Natural killer cell (primary cell): ENCODE measurements at regions of chr3 and their contacts with region 1.

Region 1: GRCh38 chr3:196867507-196868296 is at the start of gene SENP5:
- DNase-seq: peak; percentile 88 to 95
- ATAC-seq: peak; percentile 94 to 98 (median 96)
- H3K4me3 ChIP-seq: peak within 1 kb of the TSS; percentile 88
- H3K4me3 Mint-ChIP-seq: peak within 1 kb of the TSS; percentile 94
- H3K27ac ChIP-seq: peak within 1 kb of the TSS; percentile 90
- H3K27ac Mint-ChIP-seq: peak within 1 kb of the TSS; percentile 93 to 94
- H3K4me1 ChIP-seq: peaks cover 21% of the 10 kb centered on the region
- H3K4me1 Mint-ChIP-seq: peaks cover 11 to 14% of the 10 kb centered on the region in 2 donors
- H3K27me3 ChIP-seq: no peaks in the 10 kb centered on the region
- H3K27me3 Mint-ChIP-seq: no peaks in the 10 kb centered on the region
- CTCF ChIP-seq: no peak
- total RNA-seq, gene SENP5: 77.0 to 98.7 (median 78.0) TPM

Region 2: DNA sequence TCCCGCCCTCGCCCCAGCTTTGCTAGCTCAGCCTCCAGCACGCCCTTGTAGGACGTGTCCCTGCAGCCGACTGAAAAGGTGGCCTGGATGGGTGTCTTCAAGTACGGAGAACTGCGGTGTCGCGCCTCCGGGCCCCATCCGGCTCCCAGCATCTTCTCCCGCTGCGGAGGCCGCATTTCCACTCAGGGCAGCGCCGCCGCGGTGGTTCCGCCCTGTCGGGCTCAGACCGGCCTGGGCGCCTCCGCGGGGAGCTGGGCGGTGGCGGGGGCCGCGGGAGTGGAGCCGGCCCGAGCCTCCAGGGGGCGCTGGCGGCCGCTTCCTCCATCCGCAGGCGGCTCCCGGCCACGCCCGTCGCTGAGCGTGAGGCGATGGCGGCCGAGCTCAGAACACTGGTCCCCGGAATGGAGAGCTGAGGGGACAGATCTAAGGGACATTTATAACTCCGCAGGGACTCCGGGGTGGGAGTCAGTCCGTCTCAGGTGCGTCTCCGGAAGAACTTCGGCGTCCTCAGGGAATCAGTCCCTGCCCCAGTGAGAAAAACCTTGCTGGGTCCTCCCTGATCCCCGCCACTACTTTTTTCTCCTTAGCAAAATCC is 339.0 kb before region 1 on chr3:
- intact Hi-C with region 1: no loop called
- DNase-seq: peak; percentile 82 to 85
- ATAC-seq: peak; percentile 97 to 99 (median 97)
- H3K4me3 ChIP-seq: peak overlapping the region; percentile 25
- H3K4me3 Mint-ChIP-seq: peak overlapping the region; percentile 63
- H3K27ac ChIP-seq: no peak overlapping the region
- H3K27ac Mint-ChIP-seq: no peak overlapping the region
- H3K4me1 ChIP-seq: peaks cover 10% of the 10 kb centered on the region
- H3K4me1 Mint-ChIP-seq: no peaks in the 10 kb centered on the region
- H3K27me3 ChIP-seq: peaks cover 2% of the 10 kb centered on the region
- H3K27me3 Mint-ChIP-seq: peaks cover 5 to 21% of the 10 kb centered on the region in 2 donors
- CTCF ChIP-seq: peak; percentile 89

Region 3: GRCh38 chr3:196942226-196942914 is 74.7 kb after region 1 on chr3 and contains the start of gene NCBP2:
- intact Hi-C with region 1: loop called (anchors 1 kb)
- DNase-seq: peak; percentile 100
- ATAC-seq: peak; percentile 91 to 97 (median 94)
- H3K4me3 ChIP-seq: peak within 1 kb of the TSS; percentile 80
- H3K4me3 Mint-ChIP-seq: peak within 1 kb of the TSS; percentile 98
- H3K27ac ChIP-seq: peak within 1 kb of the TSS; percentile 89
- H3K27ac Mint-ChIP-seq: peak within 1 kb of the TSS; percentile 90 to 98
- H3K4me1 ChIP-seq: peaks cover 25% of the 10 kb centered on the region
- H3K4me1 Mint-ChIP-seq: peaks cover 36 to 39% of the 10 kb centered on the region in 2 donors
- H3K27me3 ChIP-seq: no peaks in the 10 kb centered on the region
- H3K27me3 Mint-ChIP-seq: no peaks in the 10 kb centered on the region
- CTCF ChIP-seq: peak; percentile 60
- total RNA-seq, gene NCBP2: 32.3 to 44.1 (median 37.5) TPM